ENCODE measurements at regions of chr10 and their contacts with region 1.

Region 1: DNA sequence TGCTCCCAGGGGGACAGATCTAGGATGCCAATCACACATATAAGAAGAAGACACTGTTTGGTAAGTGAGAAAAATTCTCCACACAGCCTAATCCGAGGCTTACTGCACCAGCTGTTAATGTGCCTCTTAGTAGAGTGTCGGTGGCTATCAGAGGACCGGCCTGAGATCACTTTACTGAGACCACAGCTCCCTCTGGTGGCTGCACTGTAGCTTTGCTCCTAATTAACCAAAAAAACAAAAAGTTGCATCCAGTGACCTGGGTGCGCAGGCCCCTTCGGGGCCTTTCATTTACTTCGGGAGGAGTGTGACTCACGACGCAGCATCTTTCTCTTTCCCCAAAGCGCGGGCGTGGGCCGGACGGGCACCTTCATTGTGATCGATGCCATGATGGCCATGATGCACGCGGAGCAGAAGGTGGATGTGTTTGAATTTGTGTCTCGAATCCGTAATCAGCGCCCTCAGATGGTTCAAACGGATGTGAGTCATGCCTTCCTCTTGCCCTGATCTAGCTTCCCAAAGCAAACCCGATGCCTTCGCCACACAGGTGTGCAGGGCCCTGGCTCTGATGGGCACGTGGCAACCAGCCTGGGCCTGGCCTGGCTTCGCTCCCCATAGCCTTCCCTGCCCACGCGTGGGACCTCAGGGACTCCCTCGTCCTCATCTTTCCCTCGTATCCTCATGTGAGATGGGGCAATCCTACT is 56.7 kb downstream of the MKI67 start:
- DNase-seq: peak; percentile 63
- H3K4me3 Mint-ChIP-seq: no peak overlapping the region
- H3K27ac Mint-ChIP-seq: no peak overlapping the region
- H3K4me1 Mint-ChIP-seq: peaks cover 41% of the 10 kb centered on the region
- H3K27me3 Mint-ChIP-seq: no peaks in the 10 kb centered on the region

Region 2: DNA sequence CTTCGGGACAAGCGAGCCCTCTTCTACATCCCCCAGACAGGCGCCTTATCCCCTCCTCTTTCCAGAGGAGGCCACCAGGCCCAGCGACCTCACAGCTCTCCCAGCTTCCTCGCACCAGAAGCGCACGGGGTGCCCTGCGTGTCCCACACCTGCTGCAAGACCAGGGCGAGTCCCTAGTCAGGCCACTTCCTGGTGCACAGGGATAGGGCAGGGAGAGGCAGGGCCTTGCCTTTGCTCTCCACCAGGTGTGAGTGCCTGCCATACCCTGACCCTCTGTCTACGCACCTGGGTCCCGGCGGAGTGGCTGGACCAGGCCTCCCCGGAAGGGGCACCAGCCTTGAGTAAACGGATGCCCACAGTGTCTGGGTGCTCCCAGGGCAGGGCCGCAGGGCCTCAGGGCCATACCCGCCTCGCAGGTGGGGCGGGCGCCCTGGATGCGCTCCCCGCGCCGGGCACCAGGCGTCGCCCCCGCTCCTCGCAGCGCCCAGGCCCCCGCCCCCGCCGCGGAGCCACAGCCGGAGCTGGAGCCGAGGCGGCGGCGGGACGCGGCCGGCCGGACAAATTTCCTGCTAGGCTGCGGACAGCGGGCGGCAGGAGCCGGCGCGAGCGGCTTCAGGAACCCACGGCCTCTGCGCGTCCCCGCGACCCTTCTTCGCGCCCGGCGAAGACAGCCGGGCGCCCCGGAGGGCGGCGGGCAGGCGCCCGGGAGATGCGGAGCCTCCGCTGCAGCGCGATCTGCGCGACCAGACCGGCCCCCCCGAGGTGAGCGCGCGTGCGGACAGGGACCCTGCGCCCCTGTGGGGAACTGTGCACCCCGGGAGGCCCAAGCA is 162.7 kb before region 1 on chr10 and contains the start of gene PTPRE:
- intact Hi-C with region 1: loop called (anchors 1 kb)
- DNase-seq: peak; percentile 66
- H3K4me3 Mint-ChIP-seq: peak within 1 kb of the TSS; percentile 66
- H3K27ac Mint-ChIP-seq: no peak within 1 kb of the TSS
- H3K4me1 Mint-ChIP-seq: no peaks in the 10 kb centered on the region
- H3K27me3 Mint-ChIP-seq: peaks cover 26% of the 10 kb centered on the region
- total RNA-seq, gene PTPRE: 40.8 and 41.8 TPM in 2 replicates

Region 3: DNA sequence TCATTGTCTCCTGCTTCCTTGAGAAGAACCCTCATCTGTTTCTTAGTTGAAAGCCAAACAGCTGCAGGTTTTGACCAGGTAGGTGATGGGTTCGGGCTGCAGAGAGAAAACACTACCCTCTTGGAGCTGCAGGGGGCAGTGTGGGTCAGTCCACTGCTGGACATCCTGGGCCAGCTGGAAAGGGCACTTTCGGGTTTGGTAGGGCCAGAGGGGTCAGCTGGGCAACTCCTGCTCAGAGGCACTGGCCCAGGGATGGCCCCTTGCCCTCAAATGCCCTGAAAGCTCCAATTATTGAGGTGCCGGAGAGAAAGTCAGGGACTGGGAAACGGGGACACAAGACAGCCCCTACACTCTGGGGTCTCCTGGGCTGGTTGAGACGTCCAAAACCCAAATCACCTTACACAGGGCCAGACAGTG is 33.9 kb before region 1 on chr10:
- intact Hi-C with region 1: loop called (anchors 1 kb)
- DNase-seq: peak; percentile 42
- H3K4me3 Mint-ChIP-seq: no peak overlapping the region
- H3K27ac Mint-ChIP-seq: no peak overlapping the region
- H3K4me1 Mint-ChIP-seq: no peaks in the 10 kb centered on the region
- H3K27me3 Mint-ChIP-seq: no peaks in the 10 kb centered on the region

Region 4: GRCh38 chr10:128047351-128047750 is 22.1 kb before region 1 on chr10:
- intact Hi-C with region 1: loop called (anchors 1 kb)
- DNase-seq: peak; percentile 83
- H3K4me3 Mint-ChIP-seq: peak overlapping the region; percentile 94
- H3K27ac Mint-ChIP-seq: peak overlapping the region; percentile 96
- H3K4me1 Mint-ChIP-seq: peaks cover 49% of the 10 kb centered on the region
- H3K27me3 Mint-ChIP-seq: peaks cover 2% of the 10 kb centered on the region